HEK293T (cell line): ENCODE measurements at regions of chr12 and their contacts with region 1.

Region 1: GRCh38 chr12:49018261-49019119 is at the start of gene PRKAG1:
- DNase-seq: peak; percentile 98

Region 2: DNA sequence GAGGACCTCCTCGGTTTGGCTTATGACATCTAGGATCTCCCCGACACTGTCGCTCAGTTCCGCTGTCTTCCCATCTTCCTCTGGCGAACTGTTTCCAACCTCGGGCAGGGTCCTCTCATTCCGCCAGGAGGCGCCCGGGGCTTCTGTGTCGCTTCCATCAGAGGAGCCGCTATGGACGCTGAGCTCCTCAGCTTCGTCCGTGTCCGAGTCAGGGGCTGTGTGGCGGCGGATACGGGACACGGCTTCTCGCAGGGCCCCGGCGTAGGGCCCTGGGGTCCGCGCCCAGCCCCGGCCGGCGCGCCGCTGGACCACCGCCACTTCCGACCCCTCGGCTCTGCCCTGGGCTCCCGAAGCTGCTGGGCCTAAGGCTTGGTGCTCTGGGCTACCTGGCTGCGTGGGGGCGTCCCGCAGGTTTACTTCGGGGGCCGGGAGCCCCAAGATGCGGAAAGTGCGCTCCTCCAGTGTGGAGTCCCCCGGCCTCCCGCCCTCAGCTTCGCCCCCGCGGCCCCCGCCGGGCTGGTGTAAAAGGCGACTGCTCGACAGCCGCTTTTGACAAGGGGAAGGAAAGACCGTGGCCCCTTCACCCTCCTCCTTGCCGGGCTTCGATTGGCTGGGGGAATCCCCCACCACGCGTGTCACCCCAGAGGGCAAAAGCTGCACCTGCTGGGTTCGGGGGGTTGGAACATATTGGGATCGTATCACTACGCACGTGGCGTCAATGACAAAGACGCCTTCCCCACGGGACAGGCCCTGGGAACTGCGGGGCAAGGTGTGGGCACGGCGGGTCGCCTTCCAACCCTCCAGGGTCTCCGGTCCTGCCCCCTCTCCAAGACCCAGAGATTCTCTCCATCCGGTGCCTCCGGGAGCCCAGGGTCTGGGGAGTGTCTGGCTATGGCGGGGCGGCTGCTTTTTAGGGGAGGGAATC is 21.4 kb before region 1 on chr12:
- CTCF ChIA-PET with region 1: interaction called, 3 read pairs
- POLR2A ChIA-PET with region 1: interaction called, 17 read pairs
- DNase-seq: peak; percentile 48